ENCODE measurements at regions of chr5 and their contacts with region 1.

Region 1: DNA sequence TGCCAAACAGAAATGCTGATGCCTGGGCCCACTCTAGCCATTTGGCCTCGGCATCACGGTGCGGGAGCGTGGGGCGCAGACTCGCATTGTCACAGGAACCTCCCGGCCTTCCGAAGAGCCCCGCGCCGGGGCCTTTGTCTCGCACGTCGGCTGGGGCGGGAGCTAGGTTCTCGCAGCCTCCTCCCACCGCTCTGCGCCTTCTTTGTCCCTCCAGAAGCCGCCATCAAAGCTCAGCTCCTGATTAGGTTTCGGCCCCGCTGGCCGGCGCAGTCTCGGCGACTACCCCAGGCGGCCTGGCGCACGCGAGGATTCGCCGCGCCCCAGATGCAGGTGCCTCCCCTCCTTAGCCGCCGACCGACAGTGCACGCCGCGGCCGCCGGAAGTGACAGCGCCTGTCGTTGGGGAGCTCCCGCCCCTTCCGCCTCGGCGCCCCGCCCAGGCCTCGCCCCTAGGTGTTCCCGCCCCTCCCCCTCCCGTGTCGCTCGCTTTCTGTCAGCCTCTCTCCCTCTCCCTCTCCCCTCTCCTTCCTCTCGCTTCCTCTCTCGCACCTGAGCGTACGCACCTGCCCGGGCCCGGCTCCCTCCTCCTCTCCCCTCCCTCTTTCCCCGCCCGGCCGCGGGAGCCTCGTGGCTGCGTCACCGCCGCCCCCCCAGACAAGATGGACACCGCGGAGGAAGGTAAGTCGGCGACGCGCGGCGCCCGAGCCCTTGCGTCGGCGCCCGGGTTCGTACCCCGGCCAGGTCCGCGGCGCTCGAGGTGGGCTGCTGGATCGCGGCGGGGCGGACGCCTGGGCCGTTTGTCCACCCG is at the start of gene MARCHF6:
- DNase-seq: peak; percentile 77
- ATAC-seq: peak; percentile 85
- H3K4me3 ChIP-seq: peak within 1 kb of the TSS; percentile 97
- H3K27ac ChIP-seq: peak within 1 kb of the TSS; percentile 97
- H3K4me1 ChIP-seq: peaks cover 3% of the 10 kb centered on the region; the same call in 1 of the 2 replicates
- H3K27me3 ChIP-seq: no peaks in the 10 kb centered on the region
- CTCF ChIP-seq: no peak
- EP300 ChIP-seq: no peak
- POLR2A ChIP-seq: peak; percentile 97
- RAD21 ChIP-seq: 0 out of 2 replicates have a peak, but pooled peaks have one; percentile 8
- polyA plus RNA-seq, gene MARCHF6: 59.0 to 74.3 TPM

Region 2: GRCh38 chr5:10295619-10296326 is 57.7 kb before region 1 on chr5:
- CTCF ChIA-PET with region 1: no interaction called
- POLR2A ChIA-PET with region 1: no interaction called
- RAD21 ChIA-PET with region 1: no interaction called
- SMC1A ChIA-PET with region 1: no interaction called
- in situ Hi-C with region 1: no loop called
- intact Hi-C with region 1: no loop called
- DNase-seq: no peak
- ATAC-seq: no peak; the same call in 2 of the 3 replicates
- H3K4me3 ChIP-seq: no peak overlapping the region
- H3K27ac ChIP-seq: no peak overlapping the region
- H3K4me1 ChIP-seq: no peaks in the 10 kb centered on the region
- H3K27me3 ChIP-seq: no peaks in the 10 kb centered on the region
- CTCF ChIP-seq: no peak
- EP300 ChIP-seq: no peak
- POLR2A ChIP-seq: no peak
- RAD21 ChIP-seq: no peak

Region 3: GRCh38 chr5:10364186-10364683 is 10.8 kb after region 1 on chr5:
- CTCF ChIA-PET with region 1: interaction called, 12 read pairs
- POLR2A ChIA-PET with region 1: interaction called, 6 read pairs
- RAD21 ChIA-PET with region 1: interaction called, 6 read pairs
- SMC1A ChIA-PET with region 1: interaction called, 6 read pairs
- in situ Hi-C with region 1: no loop called
- intact Hi-C with region 1: no loop called
- DNase-seq: no peak
- ATAC-seq: peak; percentile 72
- H3K4me3 ChIP-seq: no peak overlapping the region
- H3K27ac ChIP-seq: no peak overlapping the region
- H3K4me1 ChIP-seq: peaks cover 6% of the 10 kb centered on the region
- H3K27me3 ChIP-seq: no peaks in the 10 kb centered on the region
- CTCF ChIP-seq: peak in 2 of 3 experiments; percentile 29 to 32; a peak in 3 of 6 replicates
- EP300 ChIP-seq: no peak
- POLR2A ChIP-seq: no peak
- RAD21 ChIP-seq: peak; percentile 39

Region 4: GRCh38 chr5:10401498-10401897 is 48.1 kb after region 1 on chr5:
- CTCF ChIA-PET with region 1: interaction called, 4 read pairs
- POLR2A ChIA-PET with region 1: no interaction called
- RAD21 ChIA-PET with region 1: no interaction called
- SMC1A ChIA-PET with region 1: interaction called, 3 read pairs
- in situ Hi-C with region 1: no loop called
- intact Hi-C with region 1: loop called (anchors 5 kb)
- DNase-seq: peak; percentile 33
- ATAC-seq: peak; percentile 92
- H3K4me3 ChIP-seq: no peak overlapping the region
- H3K27ac ChIP-seq: peak overlapping the region; percentile 35; the same call in 1 of the 2 replicates
- H3K4me1 ChIP-seq: peaks cover 10% of the 10 kb centered on the region; the same call in 1 of the 2 replicates
- H3K27me3 ChIP-seq: no peaks in the 10 kb centered on the region
- CTCF ChIP-seq: no peak
- EP300 ChIP-seq: no peak
- POLR2A ChIP-seq: no peak
- RAD21 ChIP-seq: no peak

Region 5: DNA sequence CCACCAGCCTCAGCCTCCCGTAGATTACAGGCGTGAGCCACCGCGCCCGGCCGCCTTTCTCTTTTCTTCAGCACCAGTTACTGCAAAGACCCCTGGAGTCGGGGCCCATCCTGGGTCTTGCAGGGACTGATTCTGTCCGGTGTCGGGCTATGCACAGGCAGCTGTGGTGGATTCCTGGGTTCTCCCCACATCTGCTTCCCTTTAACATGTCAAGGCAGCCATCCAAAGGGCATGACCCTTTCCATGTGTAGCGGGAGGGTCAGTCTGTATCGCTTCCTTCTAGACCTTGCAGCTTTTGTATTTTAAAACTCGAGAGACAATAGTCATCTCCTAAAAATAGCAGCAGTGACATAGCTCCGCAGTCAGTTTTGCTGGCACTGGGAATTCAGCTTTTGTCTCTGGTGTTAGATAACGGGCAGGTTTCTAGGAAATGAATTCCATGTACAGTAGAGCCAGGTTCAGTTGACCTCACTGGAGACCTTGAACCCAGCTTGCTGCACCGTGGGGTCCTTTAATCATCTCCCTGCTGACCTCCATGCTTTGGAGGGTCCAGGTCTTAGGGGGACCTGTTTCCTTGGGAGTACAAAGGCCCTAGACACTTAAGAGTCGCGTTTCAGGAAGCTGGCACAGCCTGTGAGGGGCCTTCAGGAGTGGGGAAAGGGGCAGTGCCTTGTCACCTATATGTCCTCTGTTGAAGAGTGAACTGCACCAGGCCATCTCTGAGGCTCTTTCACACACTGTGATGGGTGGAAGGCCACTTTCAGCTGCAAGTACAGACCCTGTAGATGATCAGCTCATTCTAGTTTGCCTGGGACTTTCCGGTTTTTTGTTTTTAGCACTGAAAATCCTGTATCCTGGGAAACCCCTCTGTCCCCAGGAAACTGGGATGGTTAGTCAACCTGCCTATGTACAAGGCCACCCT is 224.2 kb after region 1 on chr5:
- CTCF ChIA-PET with region 1: no interaction called
- POLR2A ChIA-PET with region 1: no interaction called
- RAD21 ChIA-PET with region 1: no interaction called
- SMC1A ChIA-PET with region 1: no interaction called
- in situ Hi-C with region 1: no loop called
- intact Hi-C with region 1: loop called (anchors 10 kb)
- DNase-seq: no peak
- ATAC-seq: peak; percentile 68
- H3K4me3 ChIP-seq: peak overlapping the region; percentile 46; the same call in 1 of the 2 replicates
- H3K27ac ChIP-seq: peak overlapping the region; percentile 77
- H3K4me1 ChIP-seq: peaks cover 64% of the 10 kb centered on the region
- H3K27me3 ChIP-seq: no peaks in the 10 kb centered on the region
- CTCF ChIP-seq: no peak
- EP300 ChIP-seq: no peak
- POLR2A ChIP-seq: no peak; the same call in 1 of the 2 replicates
- RAD21 ChIP-seq: no peak

Region 6: GRCh38 chr5:10615693-10616092 is 262.2 kb after region 1 on chr5:
- CTCF ChIA-PET with region 1: no interaction called
- POLR2A ChIA-PET with region 1: no interaction called
- RAD21 ChIA-PET with region 1: no interaction called
- SMC1A ChIA-PET with region 1: no interaction called
- in situ Hi-C with region 1: no loop called
- intact Hi-C with region 1: no loop called
- DNase-seq: no peak
- ATAC-seq: no peak
- H3K4me3 ChIP-seq: no peak overlapping the region
- H3K27ac ChIP-seq: no peak overlapping the region
- H3K4me1 ChIP-seq: peaks cover 37% of the 10 kb centered on the region
- H3K27me3 ChIP-seq: no peaks in the 10 kb centered on the region
- CTCF ChIP-seq: no peak
- EP300 ChIP-seq: no peak
- POLR2A ChIP-seq: no peak
- RAD21 ChIP-seq: no peak

Region 7: DNA sequence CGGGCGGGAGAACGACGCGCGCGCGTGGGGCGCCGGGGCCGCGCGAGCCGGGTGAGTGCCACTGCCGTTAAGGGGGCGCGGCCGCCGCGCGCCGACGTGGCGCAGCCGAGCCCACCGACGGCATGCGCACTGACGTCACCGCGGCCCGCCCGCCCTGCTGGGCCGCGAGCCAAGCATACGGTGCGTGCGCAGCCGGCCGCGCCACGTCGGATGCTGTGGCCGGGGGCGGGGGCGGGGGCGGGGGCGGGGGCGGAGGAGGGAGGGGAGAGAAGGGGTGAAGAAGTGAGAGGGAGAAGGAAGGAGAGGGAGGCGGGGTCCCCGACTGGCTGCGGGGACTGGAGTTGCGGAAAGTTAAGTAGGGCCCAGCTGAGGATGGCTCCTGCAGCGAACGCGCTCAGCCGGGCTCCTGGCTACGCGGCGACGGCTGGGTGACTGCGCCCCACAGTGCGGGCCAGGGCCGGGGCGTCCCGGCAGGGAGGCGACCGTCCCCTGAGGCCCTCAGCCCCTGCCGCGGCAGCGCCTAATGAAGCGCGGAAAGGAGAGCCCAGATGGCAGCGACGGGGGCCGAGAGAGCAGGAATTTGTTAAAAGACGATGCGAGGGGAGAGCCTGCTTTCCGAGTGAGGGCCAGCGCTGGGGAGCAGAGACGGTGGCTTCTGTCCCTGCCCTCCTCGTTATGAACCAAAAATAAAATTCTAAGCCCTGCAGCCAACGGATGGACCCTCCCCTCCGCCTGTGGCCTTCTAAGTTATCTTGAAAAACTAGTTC is 407.9 kb after region 1 on chr5 and contains the start of gene DAP:
- CTCF ChIA-PET with region 1: no interaction called
- POLR2A ChIA-PET with region 1: no interaction called
- RAD21 ChIA-PET with region 1: no interaction called
- SMC1A ChIA-PET with region 1: no interaction called
- in situ Hi-C with region 1: no loop called
- intact Hi-C with region 1: loop called (anchors 10 kb)
- DNase-seq: peak; percentile 63
- ATAC-seq: peak; percentile 71
- H3K4me3 ChIP-seq: peak within 1 kb of the TSS; percentile 91
- H3K27ac ChIP-seq: peak within 1 kb of the TSS; percentile 82
- H3K4me1 ChIP-seq: peaks cover 13% of the 10 kb centered on the region
- H3K27me3 ChIP-seq: no peaks in the 10 kb centered on the region
- CTCF ChIP-seq: no peak
- EP300 ChIP-seq: no peak
- POLR2A ChIP-seq: peak; percentile 87
- RAD21 ChIP-seq: no peak
- polyA plus RNA-seq, gene DAP: 12.9 to 18.1 TPM

Measured in GM12878 (cell line).